ENCODE measurements at regions of chr7 and their contacts with region 1.

Region 1: DNA sequence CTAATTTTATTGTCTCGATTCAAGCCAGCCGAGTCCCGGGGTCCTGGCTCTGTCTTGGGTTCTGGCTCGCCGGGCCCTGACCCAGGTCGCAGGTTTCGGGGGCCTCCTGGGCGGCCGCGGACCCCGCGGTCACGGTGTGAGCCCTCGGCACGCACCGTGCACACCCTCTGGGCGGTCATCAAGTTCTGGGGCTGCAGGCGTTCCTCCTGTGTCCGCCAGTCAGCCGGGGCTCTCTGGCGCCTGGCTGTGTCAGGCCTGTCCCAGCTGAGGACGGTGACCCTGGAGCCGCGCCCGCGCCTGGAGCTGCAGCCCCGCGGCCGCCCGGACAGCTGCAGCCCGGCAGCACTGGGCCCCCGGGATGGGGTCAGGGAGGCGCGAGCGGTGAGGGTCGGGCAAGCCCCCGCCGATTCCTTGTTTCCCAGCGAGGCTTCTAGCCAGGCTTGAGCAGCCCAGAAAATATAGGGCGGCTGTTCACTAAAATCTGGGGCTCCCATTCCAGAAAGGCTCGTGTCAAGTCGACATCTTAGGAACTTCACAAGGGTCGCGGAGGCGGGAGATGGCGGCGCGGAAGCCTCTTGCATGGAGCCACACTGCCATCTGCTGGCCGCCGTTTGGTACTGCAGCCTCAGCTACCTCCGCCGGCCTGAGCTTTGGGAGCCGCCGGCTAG is 4.2 kb upstream of the HOXA7 start:
- DNase-seq: peak; percentile 70 to 93 (median 87)
- ATAC-seq: peak; percentile 87
- H3K4me3 ChIP-seq: peak overlapping the region; percentile 63 to 79
- H3K4me3 Mint-ChIP-seq: peak overlapping the region; percentile 80
- H3K27ac ChIP-seq: no peak overlapping the region
- H3K27ac Mint-ChIP-seq: no peak overlapping the region
- H3K4me1 ChIP-seq: peaks cover 31% of the 10 kb centered on the region
- H3K4me1 Mint-ChIP-seq: peaks cover 41% of the 10 kb centered on the region
- H3K27me3 ChIP-seq: peaks cover 52 to 70% of the 10 kb centered on the region in 2 experiments
- H3K27me3 Mint-ChIP-seq: peaks cover 77% of the 10 kb centered on the region
- CTCF ChIP-seq: peak; percentile 97

Region 2: GRCh38 chr7:25951031-25951948 is 1209.4 kb before region 1 on chr7:
- CTCF ChIA-PET with region 1: no interaction called
- POLR2A ChIA-PET with region 1: no interaction called
- intact Hi-C with region 1: loop called in 1 of 2 experiments (anchors 5 kb)
- DNase-seq: peak; percentile 70 to 93 (median 87)
- ATAC-seq: peak; percentile 97
- H3K4me3 ChIP-seq: peak overlapping the region; percentile 54 to 65
- H3K4me3 Mint-ChIP-seq: peak overlapping the region; percentile 90
- H3K27ac ChIP-seq: peak overlapping the region in 1 of 2 experiments; percentile 27
- H3K27ac Mint-ChIP-seq: peak overlapping the region; percentile 76
- H3K4me1 ChIP-seq: peaks cover 18% of the 10 kb centered on the region
- H3K4me1 Mint-ChIP-seq: peaks cover 22% of the 10 kb centered on the region
- H3K27me3 ChIP-seq: no peaks in the 10 kb centered on the region
- H3K27me3 Mint-ChIP-seq: peaks cover 2% of the 10 kb centered on the region
- CTCF ChIP-seq: no peak

Region 3: GRCh38 chr7:26291699-26292538 is 868.8 kb before region 1 on chr7 and contains the start of gene SNX10:
- CTCF ChIA-PET with region 1: no interaction called
- POLR2A ChIA-PET with region 1: no interaction called
- intact Hi-C with region 1: loop called in 1 of 2 experiments (anchors 10 kb)
- DNase-seq: peak; percentile 45 to 91 (median 72)
- ATAC-seq: peak; percentile 79
- H3K4me3 ChIP-seq: peak within 1 kb of the TSS; percentile 70 to 94
- H3K4me3 Mint-ChIP-seq: peak within 1 kb of the TSS; percentile 91
- H3K27ac ChIP-seq: peak within 1 kb of the TSS; percentile 43 to 78
- H3K27ac Mint-ChIP-seq: peak within 1 kb of the TSS; percentile 85
- H3K4me1 ChIP-seq: peaks cover 32% of the 10 kb centered on the region
- H3K4me1 Mint-ChIP-seq: peaks cover 38% of the 10 kb centered on the region
- H3K27me3 ChIP-seq: no peaks in the 10 kb centered on the region
- H3K27me3 Mint-ChIP-seq: no peaks in the 10 kb centered on the region
- CTCF ChIP-seq: no peak
- total RNA-seq, gene SNX10: 3.9 to 7.0 TPM

Region 4: GRCh38 chr7:26853788-26854393 is 306.8 kb before region 1 on chr7:
- CTCF ChIA-PET with region 1: interaction called, 9 read pairs
- POLR2A ChIA-PET with region 1: interaction called, 4 read pairs
- intact Hi-C with region 1: loop called (anchors 1 kb)
- DNase-seq: peak in 2 of 9 experiments; percentile 48 to 51
- ATAC-seq: no peak
- H3K4me3 ChIP-seq: no peak overlapping the region
- H3K4me3 Mint-ChIP-seq: no peak overlapping the region
- H3K27ac ChIP-seq: no peak overlapping the region
- H3K27ac Mint-ChIP-seq: no peak overlapping the region
- H3K4me1 ChIP-seq: no peaks in the 10 kb centered on the region
- H3K4me1 Mint-ChIP-seq: peaks cover 8% of the 10 kb centered on the region
- H3K27me3 ChIP-seq: peaks cover 0 to 4% of the 10 kb centered on the region in 2 experiments
- H3K27me3 Mint-ChIP-seq: peaks cover 40% of the 10 kb centered on the region
- CTCF ChIP-seq: peak; percentile 37

Region 5: GRCh38 chr7:27179503-27180430 is 19.1 kb after region 1 on chr7:
- CTCF ChIA-PET with region 1: interaction called, 17 read pairs
- POLR2A ChIA-PET with region 1: no interaction called
- intact Hi-C with region 1: no loop called
- DNase-seq: peak in 8 of 9 experiments; percentile 47 to 79 (median 64)
- ATAC-seq: peak; percentile 77
- H3K4me3 ChIP-seq: no peak overlapping the region
- H3K4me3 Mint-ChIP-seq: peak overlapping the region; percentile 61
- H3K27ac ChIP-seq: no peak overlapping the region
- H3K27ac Mint-ChIP-seq: no peak overlapping the region
- H3K4me1 ChIP-seq: peaks cover 17% of the 10 kb centered on the region
- H3K4me1 Mint-ChIP-seq: peaks cover 24% of the 10 kb centered on the region
- H3K27me3 ChIP-seq: peaks cover 53 to 57% of the 10 kb centered on the region in 2 experiments
- H3K27me3 Mint-ChIP-seq: peaks cover 66% of the 10 kb centered on the region
- CTCF ChIP-seq: peak; percentile 89